Natural killer cell (primary cell): ENCODE measurements at regions of chr2 and their contacts with region 1.

Region 1: DNA sequence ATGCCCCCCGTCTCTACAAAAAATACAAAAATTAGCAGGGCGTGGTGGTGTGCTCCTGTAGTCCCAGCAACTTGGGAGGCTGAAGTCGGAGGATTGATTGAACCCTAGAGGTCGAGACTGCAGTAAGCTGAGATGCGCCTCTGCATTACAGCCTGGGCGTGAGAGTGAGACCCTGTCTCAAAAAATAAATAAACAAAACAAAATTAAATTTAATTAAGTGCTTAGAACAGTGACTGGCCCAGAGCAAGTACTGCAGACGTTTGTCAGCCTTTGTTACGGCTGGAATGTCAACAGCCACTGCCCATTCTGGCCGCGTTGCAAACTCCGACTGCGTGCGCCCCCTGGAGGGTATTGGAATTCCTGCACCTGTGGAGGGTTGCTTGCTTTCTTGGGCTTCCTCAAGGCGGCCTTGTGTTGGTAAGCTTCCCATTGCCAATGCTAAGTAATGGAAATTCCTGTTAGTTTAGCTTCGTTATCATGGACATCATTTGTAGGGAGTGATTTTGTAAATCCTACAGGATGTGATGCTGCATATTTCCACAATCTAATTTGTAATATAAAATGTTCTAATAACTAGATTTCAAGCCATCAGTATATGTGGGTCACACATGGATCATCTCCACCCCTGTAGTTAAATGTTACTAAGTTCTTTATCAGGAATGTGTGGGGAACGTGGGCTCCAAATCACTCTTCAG is 15.9 kb upstream of the ATP6V1B1 start:
- DNase-seq: peak; percentile 77 to 81
- ATAC-seq: peak; percentile 80 to 93 (median 90)
- H3K4me3 ChIP-seq: no peak overlapping the region
- H3K4me3 Mint-ChIP-seq: no peak overlapping the region
- H3K27ac ChIP-seq: no peak overlapping the region
- H3K27ac Mint-ChIP-seq: no peak overlapping the region
- H3K4me1 ChIP-seq: no peaks in the 10 kb centered on the region
- H3K4me1 Mint-ChIP-seq: no peaks in the 10 kb centered on the region
- H3K27me3 ChIP-seq: no peaks in the 10 kb centered on the region
- H3K27me3 Mint-ChIP-seq: peaks cover 26% of the 10 kb centered on the region in 2 donors
- CTCF ChIP-seq: peak; percentile 95

Region 2: DNA sequence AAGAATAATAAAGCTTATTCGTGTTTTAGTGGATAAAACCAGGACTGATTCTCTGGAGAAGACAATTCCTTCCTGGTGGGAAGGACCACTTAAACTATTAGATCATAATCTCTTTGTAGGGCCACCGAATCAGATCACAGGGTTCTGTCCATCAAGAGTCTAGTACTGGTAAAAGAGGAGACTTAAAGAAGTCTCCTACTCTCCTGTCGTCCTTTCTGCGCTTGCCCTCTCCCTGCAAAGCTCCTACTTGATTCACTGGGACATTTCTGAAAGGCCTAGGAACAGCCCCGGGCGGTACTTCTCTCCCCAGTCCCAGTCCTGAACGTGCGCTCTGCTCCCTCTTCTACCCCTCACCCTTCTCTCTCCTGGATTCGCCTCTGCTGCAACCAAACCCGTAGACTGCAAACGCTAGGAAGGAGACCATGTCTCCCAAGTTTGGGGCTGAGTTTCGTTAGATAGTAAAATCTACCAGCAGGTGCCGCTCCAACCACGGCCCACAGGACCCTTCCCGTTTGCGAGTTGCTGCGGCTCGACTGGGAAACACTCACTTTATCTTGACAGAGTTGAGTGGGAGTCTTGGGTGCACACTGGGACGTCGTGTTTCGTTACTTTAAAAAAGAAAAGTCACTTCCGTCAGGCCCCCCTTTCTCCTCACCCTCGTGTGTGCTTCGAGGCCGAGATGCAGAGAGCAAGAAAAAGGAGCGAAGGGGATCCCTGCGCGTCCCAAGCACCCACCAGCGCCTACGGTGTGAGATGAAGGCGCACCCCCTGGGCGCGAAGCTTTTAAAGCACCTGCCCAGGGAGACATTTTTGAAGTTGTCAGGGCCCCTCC is 130.3 kb before region 1 on chr2:
- intact Hi-C with region 1: loop called (anchors 1 kb)
- DNase-seq: peak; percentile 58 to 80
- ATAC-seq: peak; percentile 58 to 86 (median 76)
- H3K4me3 ChIP-seq: peak overlapping the region; percentile 18
- H3K4me3 Mint-ChIP-seq: peak overlapping the region; percentile 93
- H3K27ac ChIP-seq: no peak overlapping the region
- H3K27ac Mint-ChIP-seq: peak overlapping the region in 1 of 2 donors; percentile 34
- H3K4me1 ChIP-seq: peaks cover 14% of the 10 kb centered on the region
- H3K4me1 Mint-ChIP-seq: peaks cover 8 to 18% of the 10 kb centered on the region in 2 donors
- H3K27me3 ChIP-seq: peaks cover 24% of the 10 kb centered on the region
- H3K27me3 Mint-ChIP-seq: peaks cover 45 to 65% of the 10 kb centered on the region in 2 donors
- CTCF ChIP-seq: peak; percentile 71

Region 3: DNA sequence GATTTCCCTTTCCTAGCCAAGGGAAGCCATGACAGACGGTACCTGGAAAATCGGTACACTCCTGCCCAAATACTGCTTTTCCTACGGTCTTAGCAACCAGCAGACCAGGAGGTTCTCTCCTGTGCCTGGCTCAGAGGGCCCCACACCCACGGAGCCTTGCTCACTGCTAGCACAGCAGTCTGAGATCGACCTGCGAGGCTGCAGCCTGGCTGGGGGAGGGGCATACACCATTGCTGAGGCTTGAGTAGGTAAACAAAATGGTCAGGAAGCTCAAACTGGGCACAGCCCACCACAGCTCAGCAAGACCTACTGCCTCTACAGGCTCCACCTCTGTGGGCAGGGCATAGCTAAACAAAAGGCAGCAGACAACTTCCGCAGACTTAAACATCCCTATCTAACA is 77.4 kb before region 1 on chr2:
- intact Hi-C with region 1: no loop called
- DNase-seq: no peak
- ATAC-seq: no peak
- H3K4me3 ChIP-seq: no peak overlapping the region
- H3K4me3 Mint-ChIP-seq: no peak overlapping the region
- H3K27ac ChIP-seq: no peak overlapping the region
- H3K27ac Mint-ChIP-seq: no peak overlapping the region
- H3K4me1 ChIP-seq: peaks cover 18% of the 10 kb centered on the region
- H3K4me1 Mint-ChIP-seq: peaks cover 14 to 21% of the 10 kb centered on the region in 2 donors
- H3K27me3 ChIP-seq: no peaks in the 10 kb centered on the region
- H3K27me3 Mint-ChIP-seq: peaks cover 0 to 3% of the 10 kb centered on the region in 2 donors
- CTCF ChIP-seq: no peak

Region 4: GRCh38 chr2:70861777-70862625 is 57.8 kb before region 1 on chr2:
- intact Hi-C with region 1: loop called (anchors 2 kb)
- DNase-seq: peak; percentile 72 to 85
- ATAC-seq: peak; percentile 81 to 99 (median 95)
- H3K4me3 ChIP-seq: no peak overlapping the region
- H3K4me3 Mint-ChIP-seq: peak overlapping the region; percentile 43
- H3K27ac ChIP-seq: no peak overlapping the region
- H3K27ac Mint-ChIP-seq: peak overlapping the region in 1 of 2 donors; percentile 65
- H3K4me1 ChIP-seq: peaks cover 6% of the 10 kb centered on the region
- H3K4me1 Mint-ChIP-seq: peaks cover 6 to 15% of the 10 kb centered on the region in 2 donors
- H3K27me3 ChIP-seq: peaks cover 5% of the 10 kb centered on the region
- H3K27me3 Mint-ChIP-seq: peaks cover 7 to 23% of the 10 kb centered on the region in 2 donors
- CTCF ChIP-seq: peak; percentile 96

Region 5: GRCh38 chr2:70871398-70872211 is 48.2 kb before region 1 on chr2:
- intact Hi-C with region 1: loop called (anchors 1 kb)
- DNase-seq: peak; percentile 84 to 89
- ATAC-seq: peak; percentile 90 to 100 (median 99)
- H3K4me3 ChIP-seq: no peak overlapping the region
- H3K4me3 Mint-ChIP-seq: no peak overlapping the region
- H3K27ac ChIP-seq: no peak overlapping the region
- H3K27ac Mint-ChIP-seq: no peak overlapping the region
- H3K4me1 ChIP-seq: peaks cover 11% of the 10 kb centered on the region
- H3K4me1 Mint-ChIP-seq: peaks cover 6 to 7% of the 10 kb centered on the region in 2 donors
- H3K27me3 ChIP-seq: peaks cover 25% of the 10 kb centered on the region
- H3K27me3 Mint-ChIP-seq: peaks cover 27 to 34% of the 10 kb centered on the region in 2 donors
- CTCF ChIP-seq: peak; percentile 90